Kidney (tissue), 22 donors: ENCODE measurements at regions of chr4 and their contacts with region 1.

Region 1: DNA sequence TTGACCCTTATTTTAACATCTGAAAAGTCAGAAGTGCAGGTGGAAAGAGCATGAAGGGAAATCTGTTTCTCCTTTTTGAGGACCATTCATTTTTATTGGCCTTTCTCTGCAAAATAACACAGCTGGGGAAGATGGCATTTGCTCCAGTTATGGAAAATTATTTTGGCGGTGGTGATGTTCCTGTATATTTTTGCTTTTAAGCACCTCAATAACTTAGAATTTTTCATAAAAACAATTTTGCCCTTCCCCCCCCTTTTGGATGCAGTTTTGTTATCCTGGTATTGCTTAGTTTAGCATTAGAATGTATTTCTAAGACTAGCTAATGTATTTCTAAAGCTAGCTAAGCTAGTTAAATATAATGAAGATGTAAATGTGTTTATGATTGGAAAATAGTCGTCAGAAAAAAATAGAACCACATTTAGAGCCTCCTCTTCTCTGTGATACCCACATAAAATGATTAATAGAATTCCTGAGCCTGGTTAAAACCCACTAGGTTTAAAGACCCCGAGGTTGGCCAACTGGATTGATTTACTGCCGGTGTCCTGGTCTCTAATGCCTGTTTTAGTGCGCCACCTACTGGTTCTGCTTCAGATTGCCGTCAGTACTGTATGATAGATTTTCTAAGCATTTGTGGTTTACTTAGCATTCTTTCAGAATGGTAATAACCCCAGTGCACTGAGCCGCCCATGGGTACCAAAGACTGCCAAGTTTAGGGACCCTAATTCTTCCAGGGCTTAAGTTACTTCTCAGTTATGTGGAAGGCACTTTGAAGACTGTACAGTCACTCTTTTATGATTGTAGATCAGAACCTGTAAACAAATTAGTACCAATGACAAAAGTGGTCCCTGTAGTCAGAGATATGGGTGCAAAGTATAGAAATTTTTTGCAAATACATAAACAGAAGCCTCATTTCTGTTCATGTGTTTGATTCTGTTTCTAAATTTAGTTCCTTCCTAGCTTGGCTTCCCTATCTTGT is 11.4 kb downstream of the KLF3 start:
- DNase-seq: peak in 4 of 5 donors; percentile 87 to 95 (median 91)
- H3K4me3 ChIP-seq: peak overlapping the region in 2 of 3 donors; percentile 45 to 48
- H3K27ac ChIP-seq: peak overlapping the region; percentile 75 to 77
- H3K4me1 ChIP-seq: peaks cover 13 to 55% (median 45%) of the 10 kb centered on the region in 3 donors
- H3K27me3 ChIP-seq: no peaks in the 10 kb centered on the region
- CTCF ChIP-seq: peak; percentile 97

Region 2: GRCh38 chr4:38319456-38320342 is 355.7 kb before region 1 on chr4:
- intact Hi-C with region 1: loop called (anchors 10 kb)
- DNase-seq: peak; percentile 93 to 97 (median 96)
- H3K4me3 ChIP-seq: peak overlapping the region; percentile 28 to 75 (median 45)
- H3K27ac ChIP-seq: peak overlapping the region; percentile 78 to 94
- H3K4me1 ChIP-seq: peaks cover 8 to 21% (median 12%) of the 10 kb centered on the region in 3 donors
- H3K27me3 ChIP-seq: no peaks in the 10 kb centered on the region
- CTCF ChIP-seq: peak; percentile 98